ENCODE measurements at regions of chr7 and their contacts with region 1.

Region 1: GRCh38 chr7:33040803-33041516 is 21.6 kb downstream of the NT5C3A start:
- DNase-seq: no peak
- ATAC-seq: peak; percentile 98
- H3K4me3 Mint-ChIP-seq: peak overlapping the region; percentile 79
- H3K27ac Mint-ChIP-seq: peak overlapping the region; percentile 81
- H3K4me1 Mint-ChIP-seq: peaks cover 75% of the 10 kb centered on the region
- H3K27me3 Mint-ChIP-seq: no peaks in the 10 kb centered on the region
- CTCF ChIP-seq: no peak

Region 2: GRCh38 chr7:32453341-32454011 is 587.5 kb before region 1 on chr7:
- CTCF ChIA-PET with region 1: no interaction called
- POLR2A ChIA-PET with region 1: no interaction called
- intact Hi-C with region 1: no loop called
- DNase-seq: no peak
- ATAC-seq: no peak
- H3K4me3 Mint-ChIP-seq: no peak overlapping the region
- H3K27ac Mint-ChIP-seq: no peak overlapping the region
- H3K4me1 Mint-ChIP-seq: no peaks in the 10 kb centered on the region
- H3K27me3 Mint-ChIP-seq: peaks cover 27% of the 10 kb centered on the region
- CTCF ChIP-seq: no peak

Region 3: DNA sequence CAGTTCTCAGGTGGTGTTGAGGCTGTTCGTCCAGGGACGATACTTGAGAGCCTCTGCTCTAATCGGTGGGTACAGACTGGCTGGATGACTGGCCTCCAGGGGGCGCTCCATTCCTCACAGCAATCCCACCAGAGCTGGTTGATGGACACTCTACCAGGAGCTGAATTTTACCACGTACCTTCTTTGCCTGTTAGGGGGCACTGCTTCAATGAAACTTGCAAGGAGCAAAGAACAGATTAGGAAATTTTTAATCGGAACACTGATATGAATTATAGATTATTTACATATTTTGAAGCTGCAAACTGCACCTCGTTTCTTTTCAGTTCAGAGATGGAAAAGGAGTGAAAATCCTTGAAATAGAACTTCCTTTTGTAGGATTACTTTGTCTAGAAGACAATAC is 194.3 kb before region 1 on chr7:
- CTCF ChIA-PET with region 1: interaction called, 16 read pairs
- POLR2A ChIA-PET with region 1: interaction called, 4 read pairs
- intact Hi-C with region 1: no loop called
- DNase-seq: peak; percentile 81
- ATAC-seq: peak; percentile 100
- H3K4me3 Mint-ChIP-seq: no peak overlapping the region
- H3K27ac Mint-ChIP-seq: no peak overlapping the region
- H3K4me1 Mint-ChIP-seq: peaks cover 5% of the 10 kb centered on the region
- H3K27me3 Mint-ChIP-seq: peaks cover 18% of the 10 kb centered on the region
- CTCF ChIP-seq: peak; percentile 52

Region 4: GRCh38 chr7:33024189-33024757 is 16.7 kb before region 1 on chr7:
- CTCF ChIA-PET with region 1: no interaction called
- POLR2A ChIA-PET with region 1: no interaction called
- intact Hi-C with region 1: loop called (anchors 2 kb)
- DNase-seq: no peak
- ATAC-seq: no peak
- H3K4me3 Mint-ChIP-seq: no peak overlapping the region
- H3K27ac Mint-ChIP-seq: no peak overlapping the region
- H3K4me1 Mint-ChIP-seq: no peaks in the 10 kb centered on the region
- H3K27me3 Mint-ChIP-seq: no peaks in the 10 kb centered on the region
- CTCF ChIP-seq: no peak